Heart left ventricle (tissue), 16 donors: ENCODE measurements at regions of chr17 and their contacts with region 1.

Region 1: GRCh38 chr17:58112970-58113631 is 29.9 kb downstream of the DYNLL2 start:
- DNase-seq: peak; percentile 61 to 79 (median 72)
- ATAC-seq: peak; percentile 66 to 90 (median 81)
- H3K4me3 ChIP-seq: no peak overlapping the region
- H3K27ac ChIP-seq: no peak overlapping the region
- H3K4me1 ChIP-seq: peaks cover 0 to 5% (median 0%) of the 10 kb centered on the region in 12 donors
- H3K27me3 ChIP-seq: peaks cover 0 to 19% (median 0%) of the 10 kb centered on the region in 9 donors
- CTCF ChIP-seq: peak; percentile 89 to 95 (median 94)
- POLR2A ChIP-seq: no peak

Region 2: DNA sequence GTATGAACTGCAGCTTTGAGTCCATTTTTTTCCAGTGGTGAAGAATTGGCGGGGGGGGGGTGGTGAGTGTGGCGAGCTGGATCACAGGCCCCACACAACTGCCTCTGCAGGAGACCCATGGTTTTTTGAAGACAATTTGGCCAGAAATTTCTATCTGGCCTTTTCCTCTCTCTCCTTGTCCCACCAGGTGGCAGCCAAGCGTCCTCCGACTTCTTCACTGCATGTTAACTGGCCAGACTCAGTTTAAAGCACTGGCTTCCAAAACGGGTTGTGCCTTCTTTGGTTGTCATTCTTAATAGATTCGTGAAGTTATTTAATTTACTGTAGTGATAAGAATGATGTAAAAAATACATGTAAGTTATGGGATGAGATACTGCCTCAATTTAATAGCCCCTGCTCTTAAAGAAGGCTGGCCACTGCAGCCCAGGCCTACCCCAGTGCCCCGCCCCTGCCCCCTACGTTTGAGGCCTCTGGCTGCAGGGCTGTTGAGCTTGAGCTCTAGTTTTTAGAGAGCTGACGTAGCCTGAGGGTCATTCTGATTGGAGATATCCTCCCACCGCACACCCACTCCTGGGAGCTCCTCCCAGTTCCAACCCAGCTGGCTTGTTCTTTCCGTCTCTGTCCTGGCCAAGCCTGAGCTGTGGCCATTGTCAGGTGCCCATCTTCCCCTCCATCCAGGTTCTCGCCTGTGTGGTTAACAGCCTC is 991.6 kb before region 1 on chr17:
- intact Hi-C with region 1: loop called in 2 of 10 experiments (anchors 10 kb)
- DNase-seq: peak in 1 of 5 donors; percentile 41
- ATAC-seq: peak; percentile 19 to 57 (median 47)
- H3K4me3 ChIP-seq: no peak overlapping the region
- H3K27ac ChIP-seq: peak overlapping the region in 2 of 12 donors; percentile 14 to 41
- H3K4me1 ChIP-seq: peaks cover 0 to 18% (median 0%) of the 10 kb centered on the region in 12 donors
- H3K27me3 ChIP-seq: no peaks in the 10 kb centered on the region
- CTCF ChIP-seq: peak in 11 of 12 donors; percentile 12 to 61 (median 45)
- POLR2A ChIP-seq: no peak

Region 3: DNA sequence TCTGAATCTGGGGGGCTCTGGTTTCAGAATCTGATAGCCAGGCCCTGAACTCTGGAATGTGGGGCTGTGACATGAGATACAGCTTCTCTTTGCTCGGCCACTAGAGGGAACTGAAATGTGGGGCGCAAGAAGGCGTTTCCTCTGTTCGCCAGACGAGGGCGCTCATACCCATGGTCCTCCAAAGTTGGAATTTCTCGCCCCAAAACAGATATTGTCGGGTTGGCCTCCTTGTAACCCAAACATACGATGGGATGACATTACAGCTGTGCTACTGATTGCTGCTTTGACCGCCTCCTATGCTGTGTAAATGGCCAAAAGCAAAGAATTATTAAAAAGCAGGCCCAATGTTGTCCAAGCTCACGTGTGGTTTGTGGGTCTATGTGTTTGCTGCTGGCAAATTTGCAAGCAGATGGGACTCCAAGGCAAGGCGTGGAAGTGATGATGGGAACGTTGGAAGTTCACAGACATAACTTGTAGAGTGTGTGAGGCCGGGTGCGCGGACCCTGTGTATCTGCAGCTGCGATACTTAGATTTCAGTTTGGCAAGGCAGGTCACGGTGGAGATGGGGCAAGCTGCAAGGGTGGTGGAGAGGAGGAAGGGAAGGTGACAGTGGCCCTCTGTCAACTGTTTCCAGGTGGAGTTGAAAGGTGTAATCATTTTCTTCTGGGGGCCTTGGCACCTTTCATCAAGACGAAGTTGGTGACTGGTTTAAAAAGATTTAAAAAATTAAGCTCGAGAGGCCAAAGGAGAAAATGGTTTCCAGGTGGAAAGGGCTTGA is 869.7 kb before region 1 on chr17:
- intact Hi-C with region 1: loop called in 1 of 10 experiments (anchors 5 kb)
- DNase-seq: peak; percentile 38 to 73 (median 60)
- ATAC-seq: peak; percentile 58 to 85 (median 74)
- H3K4me3 ChIP-seq: no peak overlapping the region
- H3K27ac ChIP-seq: peak overlapping the region in 6 of 12 donors; percentile 16 to 67 (median 41)
- H3K4me1 ChIP-seq: peaks cover 0 to 17% (median 12%) of the 10 kb centered on the region in 12 donors
- H3K27me3 ChIP-seq: peaks cover 0 to 4% (median 0%) of the 10 kb centered on the region in 9 donors
- CTCF ChIP-seq: peak; percentile 95 to 99 (median 97)
- POLR2A ChIP-seq: no peak

Region 4: DNA sequence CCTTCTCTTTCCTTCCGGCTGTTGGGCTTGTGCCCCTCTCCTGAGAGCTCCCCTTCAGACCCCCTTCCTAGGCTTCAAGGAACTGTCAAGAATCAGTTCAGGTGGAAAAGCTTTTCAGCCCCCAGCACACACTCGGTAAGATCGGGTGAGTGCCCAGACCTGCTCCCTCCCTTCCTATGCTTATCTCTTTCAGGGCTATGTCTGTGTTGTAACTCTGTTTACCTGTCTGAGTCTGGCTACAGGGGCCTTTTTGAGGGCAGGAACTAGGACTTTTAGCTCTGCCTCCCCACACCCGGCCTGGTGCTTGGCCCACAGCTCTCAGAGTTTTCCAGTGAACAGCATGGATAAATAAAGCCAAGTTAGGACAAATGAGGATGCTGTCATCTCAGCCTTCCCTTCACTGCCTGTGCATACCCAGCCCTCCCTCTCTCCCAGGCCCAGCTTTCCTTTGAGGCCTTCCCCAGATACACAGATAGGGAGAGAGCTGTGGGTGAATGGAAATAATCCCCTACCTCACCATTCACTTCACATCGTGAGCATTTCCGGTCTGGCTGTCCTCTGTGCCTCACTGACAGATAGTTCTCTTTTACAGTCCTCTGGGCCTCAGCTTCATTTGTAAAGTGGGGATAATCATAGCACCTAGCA is 257.6 kb before region 1 on chr17:
- intact Hi-C with region 1: loop called (anchors 2 to 5 kb)
- DNase-seq: no peak
- ATAC-seq: no peak
- H3K4me3 ChIP-seq: no peak overlapping the region
- H3K27ac ChIP-seq: peak overlapping the region in 7 of 12 donors; percentile 32 to 97 (median 92)
- H3K4me1 ChIP-seq: peaks cover 0 to 57% (median 34%) of the 10 kb centered on the region in 12 donors
- H3K27me3 ChIP-seq: no peaks in the 10 kb centered on the region
- CTCF ChIP-seq: no peak
- POLR2A ChIP-seq: no peak

Region 5: GRCh38 chr17:57995076-57995956 is 117.8 kb before region 1 on chr17:
- intact Hi-C with region 1: loop called in 5 of 10 experiments (anchors 2 to 10 kb)
- DNase-seq: peak in 4 of 5 donors; percentile 67 to 71 (median 69)
- ATAC-seq: peak; percentile 88 to 94 (median 91)
- H3K4me3 ChIP-seq: no peak overlapping the region
- H3K27ac ChIP-seq: peak overlapping the region in 11 of 12 donors; percentile 5 to 98 (median 54)
- H3K4me1 ChIP-seq: peaks cover 0 to 53% (median 25%) of the 10 kb centered on the region in 12 donors
- H3K27me3 ChIP-seq: no peaks in the 10 kb centered on the region
- CTCF ChIP-seq: peak; percentile 46 to 72 (median 68)
- POLR2A ChIP-seq: no peak